Vagina (tissue), 2 donors: ENCODE measurements at regions of chr17 and their contacts with region 1.

Region 1: DNA sequence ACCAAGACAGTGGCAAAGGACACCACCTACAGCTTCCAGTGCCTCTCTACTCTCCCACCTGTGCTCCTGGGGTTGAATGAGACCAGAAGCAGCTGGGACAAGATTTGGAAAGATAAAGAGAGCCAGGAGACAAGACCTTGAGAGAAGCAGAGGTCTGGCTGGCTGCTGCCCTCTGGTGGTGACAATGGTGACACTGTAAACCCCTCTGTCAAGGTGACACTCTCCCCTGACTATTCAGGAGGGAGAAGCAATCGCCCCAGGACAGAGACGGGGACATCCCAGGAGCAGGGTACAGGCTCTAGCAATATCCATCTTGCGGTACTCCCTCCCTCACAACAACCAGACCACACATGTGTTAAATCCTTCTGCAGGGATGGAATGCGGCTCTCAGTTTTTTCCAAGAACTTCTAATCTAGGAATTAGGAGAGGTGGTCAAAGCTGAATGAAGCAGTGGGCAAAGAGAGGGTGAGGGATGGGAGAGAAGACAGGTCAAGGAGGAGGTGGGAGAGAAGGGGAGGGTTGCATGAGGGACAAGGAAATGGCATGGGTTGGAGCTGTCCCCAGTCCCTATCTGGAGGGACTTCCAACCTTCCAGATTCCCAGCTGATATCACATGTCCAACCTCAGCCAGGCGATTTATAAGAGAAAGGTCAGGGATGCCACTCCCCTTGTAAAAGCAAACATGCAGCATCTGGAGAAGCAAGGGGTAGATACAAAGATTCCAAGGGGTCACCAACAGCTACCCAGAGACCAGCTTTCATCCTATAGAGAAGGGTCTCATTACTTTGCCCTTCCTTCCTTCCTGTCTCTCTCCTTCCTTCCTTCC is 2.9 kb downstream of the PHOSPHO1 start:
- DNase-seq: no peak
- H3K4me3 ChIP-seq: no peak overlapping the region
- H3K27ac ChIP-seq: no peak overlapping the region
- H3K4me1 ChIP-seq: peaks cover 36% of the 10 kb centered on the region
- H3K27me3 ChIP-seq: peaks cover 13% of the 10 kb centered on the region
- CTCF ChIP-seq: peak; percentile 38 to 82 (median 70)
- POLR2A ChIP-seq: no peak

Region 2: GRCh38 chr17:49180303-49180702 is 47.3 kb before region 1 on chr17:
- intact Hi-C with region 1: loop called (anchors 5 kb)
- DNase-seq: no peak
- H3K4me3 ChIP-seq: no peak overlapping the region
- H3K27ac ChIP-seq: no peak overlapping the region
- H3K4me1 ChIP-seq: no peaks in the 10 kb centered on the region
- H3K27me3 ChIP-seq: no peaks in the 10 kb centered on the region
- CTCF ChIP-seq: peak in 2 of 3 experiments; percentile 68 to 72
- POLR2A ChIP-seq: no peak